AG04449 (cell line): ENCODE measurements at regions of chr10 and their contacts with region 1.

Region 1: DNA sequence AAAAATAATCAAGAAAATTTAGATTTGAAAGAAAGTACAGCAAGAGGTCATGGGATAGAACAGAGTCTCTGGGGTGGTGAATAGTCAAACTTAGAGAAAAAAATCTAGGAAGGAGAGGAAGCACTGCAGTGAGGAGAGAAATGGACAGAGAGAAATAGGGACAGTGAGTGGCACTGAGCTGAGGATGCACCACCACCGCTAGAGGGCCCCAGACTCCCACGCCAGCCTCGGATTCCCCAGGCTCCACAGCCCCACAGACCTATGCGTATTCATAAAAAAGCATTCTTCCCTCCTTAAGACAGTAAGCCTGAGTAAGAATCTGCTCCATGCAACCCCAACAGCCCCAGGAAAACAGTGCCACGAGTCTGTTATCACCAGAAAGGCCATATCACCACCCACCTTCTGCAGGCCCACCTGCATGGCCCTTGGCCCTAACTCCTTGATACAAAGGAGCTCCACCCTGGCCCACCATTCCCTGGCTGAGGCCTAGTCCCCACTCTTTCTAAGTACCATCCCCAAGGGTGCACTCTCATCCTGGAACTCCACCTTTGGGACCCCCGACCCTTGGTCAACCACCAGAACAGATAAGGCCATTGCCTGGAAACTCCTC is 91.0 kb downstream of the ALOX5 start:
- DNase-seq: no peak
- H3K4me3 ChIP-seq: no peak overlapping the region
- CTCF ChIP-seq: peak; percentile 97

Region 2: DNA sequence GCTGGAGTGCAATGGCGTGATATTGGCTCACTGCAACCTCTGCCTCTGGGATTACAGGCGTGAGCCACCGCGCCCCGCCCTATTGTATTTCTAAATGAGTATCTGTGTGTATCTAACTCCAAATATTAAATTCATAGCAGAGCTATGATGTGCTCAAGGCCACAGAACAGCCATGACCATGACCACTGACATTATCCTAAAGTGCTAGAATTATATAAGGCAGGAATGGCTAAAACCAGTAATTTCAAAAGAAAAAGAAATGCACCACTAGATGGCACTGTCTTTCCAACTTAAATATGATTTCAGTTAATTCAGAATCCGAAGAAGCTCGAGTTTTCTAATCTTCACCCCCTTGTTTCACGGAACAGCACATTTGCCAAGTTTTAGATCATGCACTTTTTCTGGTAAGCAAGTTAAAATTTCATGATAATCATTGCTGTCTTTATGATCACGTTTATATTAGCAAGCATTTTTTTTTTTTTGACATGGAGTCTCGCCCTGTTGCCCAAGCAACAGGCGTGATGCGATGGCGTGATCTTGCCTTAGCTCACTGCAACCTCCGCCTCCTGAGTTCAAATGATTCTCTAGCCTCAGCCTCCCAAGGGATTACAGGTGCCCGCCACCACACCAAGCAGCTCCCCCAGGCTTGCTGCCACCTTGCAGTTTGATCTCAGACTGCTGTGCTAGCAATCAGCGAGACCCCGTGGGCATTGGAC is 214.9 kb before region 1 on chr10:
- CTCF ChIA-PET with region 1: no interaction called
- POLR2A ChIA-PET with region 1: no interaction called
- DNase-seq: no peak
- H3K4me3 ChIP-seq: 0 out of 2 replicates have a peak overlapping the region, but pooled peaks have one; percentile 10
- CTCF ChIP-seq: peak; percentile 11

Region 3: GRCh38 chr10:45454859-45455258 is 10.2 kb before region 1 on chr10:
- CTCF ChIA-PET with region 1: interaction called, 10 read pairs
- POLR2A ChIA-PET with region 1: no interaction called
- DNase-seq: no peak
- H3K4me3 ChIP-seq: no peak overlapping the region
- CTCF ChIP-seq: no peak

Region 4: GRCh38 chr10:45672181-45673073 is 207.4 kb after region 1 on chr10 and contains the start of gene ZFAND4:
- CTCF ChIA-PET with region 1: interaction called, 21 read pairs
- POLR2A ChIA-PET with region 1: interaction called, 3 read pairs
- DNase-seq: peak; percentile 70
- H3K4me3 ChIP-seq: peak within 1 kb of the TSS; percentile 89
- CTCF ChIP-seq: peak; percentile 78